CD4-positive, alpha-beta memory T cell (primary cell): ENCODE measurements at regions of chr10 and their contacts with region 1.

Region 1: GRCh38 chr10:6580279-6581029 is 378 bp upstream of the PRKCQ start:
- DNase-seq: peak; percentile 76 to 86 (median 82)
- H3K4me3 ChIP-seq: peak overlapping the region; percentile 83 to 86
- H3K4me3 Mint-ChIP-seq: peak overlapping the region; percentile 90 to 99 (median 94)
- H3K27ac ChIP-seq: peak overlapping the region; percentile 90
- H3K27ac Mint-ChIP-seq: peak overlapping the region; percentile 93 to 99 (median 96)
- H3K4me1 ChIP-seq: peaks cover 63% of the 10 kb centered on the region
- H3K4me1 Mint-ChIP-seq: peaks cover 40 to 82% (median 52%) of the 10 kb centered on the region in 4 donors
- H3K27me3 ChIP-seq: no peaks in the 10 kb centered on the region
- H3K27me3 Mint-ChIP-seq: no peaks in the 10 kb centered on the region

Region 2: GRCh38 chr10:6300106-6300783 is 280.2 kb before region 1 on chr10:
- CTCF ChIA-PET with region 1: no interaction called
- POLR2A ChIA-PET with region 1: no interaction called
- intact Hi-C with region 1: no loop called
- DNase-seq: peak; percentile 56 to 76 (median 71)
- H3K4me3 ChIP-seq: peak overlapping the region in 1 of 2 donors; percentile 28
- H3K4me3 Mint-ChIP-seq: peak overlapping the region; percentile 26 to 82 (median 57)
- H3K27ac ChIP-seq: peak overlapping the region; percentile 27
- H3K27ac Mint-ChIP-seq: peak overlapping the region; percentile 72 to 95 (median 91)
- H3K4me1 ChIP-seq: peaks cover 26% of the 10 kb centered on the region
- H3K4me1 Mint-ChIP-seq: peaks cover 16 to 42% (median 28%) of the 10 kb centered on the region in 4 donors
- H3K27me3 ChIP-seq: no peaks in the 10 kb centered on the region
- H3K27me3 Mint-ChIP-seq: no peaks in the 10 kb centered on the region

Region 3: DNA sequence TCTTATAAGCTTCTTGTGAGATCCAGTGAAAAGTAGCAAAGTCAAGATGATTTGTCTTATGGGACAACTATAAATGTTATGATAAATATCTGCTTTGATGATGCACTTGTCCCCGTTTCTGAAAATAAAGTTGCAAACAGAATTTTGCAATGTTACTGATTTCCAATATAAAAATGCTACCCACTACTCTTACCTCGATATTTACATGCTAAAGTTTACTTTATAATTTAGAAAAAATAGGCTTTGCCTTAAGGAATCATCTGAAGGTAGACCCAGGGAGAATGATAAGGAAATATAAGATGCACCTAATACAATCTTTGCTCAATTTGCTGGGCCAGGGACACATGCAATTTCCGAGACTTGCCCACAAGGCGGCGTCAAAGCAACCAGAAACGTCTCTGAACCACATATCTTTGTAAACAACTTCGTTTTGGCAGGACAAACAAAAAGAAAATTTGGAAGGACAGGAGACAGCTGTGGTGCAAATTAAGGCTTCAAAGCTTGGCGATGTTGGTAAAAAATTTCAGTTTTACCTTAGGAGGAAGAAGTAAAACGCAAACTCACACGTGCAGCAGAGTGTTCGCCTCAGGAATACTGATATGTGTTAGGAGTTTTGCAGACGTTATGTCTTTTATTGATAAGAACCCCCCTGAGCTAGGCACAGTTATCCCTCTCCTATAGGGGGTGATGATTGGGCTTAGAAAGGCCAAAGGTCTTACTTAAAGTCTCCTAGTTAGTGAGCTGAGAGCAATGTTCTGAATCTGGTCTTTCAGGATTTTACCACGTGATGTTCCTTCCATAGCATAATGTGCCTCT is 134.7 kb before region 1 on chr10:
- CTCF ChIA-PET with region 1: interaction called, 12 read pairs
- POLR2A ChIA-PET with region 1: interaction called, 9 read pairs
- intact Hi-C with region 1: loop called (anchors 1 kb)
- DNase-seq: peak; percentile 41 to 50 (median 46)
- H3K4me3 ChIP-seq: no peak overlapping the region
- H3K4me3 Mint-ChIP-seq: peak overlapping the region in 2 of 8 donors; percentile 3 to 41
- H3K27ac ChIP-seq: no peak overlapping the region
- H3K27ac Mint-ChIP-seq: peak overlapping the region in 6 of 7 donors; percentile 24 to 73 (median 58)
- H3K4me1 ChIP-seq: peaks cover 5% of the 10 kb centered on the region
- H3K4me1 Mint-ChIP-seq: peaks cover 18 to 44% (median 30%) of the 10 kb centered on the region in 4 donors
- H3K27me3 ChIP-seq: no peaks in the 10 kb centered on the region
- H3K27me3 Mint-ChIP-seq: no peaks in the 10 kb centered on the region

Region 4: GRCh38 chr10:6514844-6515780 is 65.3 kb before region 1 on chr10:
- CTCF ChIA-PET with region 1: interaction called, 7 read pairs
- POLR2A ChIA-PET with region 1: interaction called, 8 read pairs
- intact Hi-C with region 1: loop called (anchors 2 kb)
- DNase-seq: no peak
- H3K4me3 ChIP-seq: no peak overlapping the region
- H3K4me3 Mint-ChIP-seq: peak overlapping the region in 1 of 8 donors; percentile 11
- H3K27ac ChIP-seq: no peak overlapping the region
- H3K27ac Mint-ChIP-seq: peak overlapping the region in 6 of 7 donors; percentile 21 to 83 (median 68)
- H3K4me1 ChIP-seq: peaks cover 78% of the 10 kb centered on the region
- H3K4me1 Mint-ChIP-seq: peaks cover 63 to 94% (median 75%) of the 10 kb centered on the region in 4 donors
- H3K27me3 ChIP-seq: no peaks in the 10 kb centered on the region
- H3K27me3 Mint-ChIP-seq: no peaks in the 10 kb centered on the region

Region 5: GRCh38 chr10:6563075-6563474 is 17.4 kb before region 1 on chr10:
- CTCF ChIA-PET with region 1: interaction called, 29 read pairs
- POLR2A ChIA-PET with region 1: interaction called, 124 read pairs
- intact Hi-C with region 1: loop called (anchors 1 kb)
- DNase-seq: peak in 2 of 5 donors; percentile 35 to 62
- H3K4me3 ChIP-seq: peak overlapping the region in 1 of 2 donors; percentile 21
- H3K4me3 Mint-ChIP-seq: peak overlapping the region; percentile 68 to 90 (median 79)
- H3K27ac ChIP-seq: peak overlapping the region; percentile 56
- H3K27ac Mint-ChIP-seq: peak overlapping the region; percentile 85 to 94 (median 90)
- H3K4me1 ChIP-seq: peaks cover 98% of the 10 kb centered on the region
- H3K4me1 Mint-ChIP-seq: peaks cover 79 to 94% (median 88%) of the 10 kb centered on the region in 4 donors
- H3K27me3 ChIP-seq: no peaks in the 10 kb centered on the region
- H3K27me3 Mint-ChIP-seq: no peaks in the 10 kb centered on the region

Region 6: DNA sequence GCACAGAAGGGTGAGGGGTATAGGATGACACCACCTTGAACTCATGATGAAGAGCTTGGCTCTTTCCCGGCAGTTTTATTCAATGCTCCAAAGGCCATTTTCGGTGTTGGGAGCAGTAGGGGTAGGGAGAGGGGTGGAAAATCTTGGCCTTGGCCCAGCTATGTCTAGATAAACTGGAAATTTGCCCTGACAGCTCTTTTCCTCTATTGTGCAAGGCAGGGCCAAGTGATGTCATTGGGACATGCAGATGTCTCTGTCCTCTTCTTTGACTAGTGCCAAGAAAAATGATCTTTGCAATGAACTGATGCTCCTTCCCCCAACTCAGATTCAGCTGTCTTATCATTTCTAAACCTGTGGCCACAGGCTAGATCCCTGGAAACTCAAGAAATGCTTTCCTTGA is 27.3 kb after region 1 on chr10:
- CTCF ChIA-PET with region 1: interaction called, 106 read pairs
- POLR2A ChIA-PET with region 1: interaction called, 355 read pairs
- intact Hi-C with region 1: loop called (anchors 5 kb)
- DNase-seq: no peak
- H3K4me3 ChIP-seq: no peak overlapping the region
- H3K4me3 Mint-ChIP-seq: peak overlapping the region in 1 of 8 donors; percentile 72
- H3K27ac ChIP-seq: peak overlapping the region; percentile 43
- H3K27ac Mint-ChIP-seq: peak overlapping the region; percentile 73 to 97 (median 93)
- H3K4me1 ChIP-seq: peaks cover 47% of the 10 kb centered on the region
- H3K4me1 Mint-ChIP-seq: peaks cover 43 to 74% (median 53%) of the 10 kb centered on the region in 4 donors
- H3K27me3 ChIP-seq: no peaks in the 10 kb centered on the region
- H3K27me3 Mint-ChIP-seq: no peaks in the 10 kb centered on the region

Region 7: DNA sequence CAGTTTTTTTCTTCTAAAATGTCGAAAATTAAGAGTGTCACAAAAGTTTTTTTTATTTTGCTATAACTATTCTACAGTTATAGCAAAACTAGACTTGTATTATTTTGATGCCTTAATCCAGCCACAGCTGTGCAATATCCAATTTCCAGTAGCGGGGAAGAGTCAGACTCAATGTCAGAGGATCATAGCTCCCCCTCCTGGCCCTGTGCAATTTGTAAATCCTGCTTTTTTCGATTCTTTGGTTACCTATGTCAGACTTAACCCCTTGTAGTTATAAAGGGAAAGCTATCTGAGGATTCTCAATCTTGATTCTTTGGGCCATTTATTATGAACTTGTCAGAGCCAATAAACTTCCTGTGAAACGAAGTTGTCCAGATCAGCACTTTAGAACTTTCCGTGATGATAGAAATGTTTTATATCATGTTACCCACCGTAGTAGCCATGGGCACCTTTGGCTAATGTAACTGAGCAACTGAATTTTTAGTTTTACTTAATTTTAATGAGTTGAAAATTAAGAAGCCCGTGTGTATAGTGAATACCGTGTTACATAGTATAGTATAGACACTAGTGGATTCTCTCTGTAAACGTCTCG is 87.3 kb after region 1 on chr10:
- CTCF ChIA-PET with region 1: interaction called, 15 read pairs
- POLR2A ChIA-PET with region 1: interaction called, 18 read pairs
- intact Hi-C with region 1: loop called (anchors 1 kb)
- DNase-seq: peak in 4 of 5 donors; percentile 15 to 34 (median 26)
- H3K4me3 ChIP-seq: no peak overlapping the region
- H3K4me3 Mint-ChIP-seq: peak overlapping the region in 1 of 8 donors; percentile 10
- H3K27ac ChIP-seq: no peak overlapping the region
- H3K27ac Mint-ChIP-seq: no peak overlapping the region
- H3K4me1 ChIP-seq: peaks cover 22% of the 10 kb centered on the region
- H3K4me1 Mint-ChIP-seq: peaks cover 15 to 28% (median 21%) of the 10 kb centered on the region in 4 donors
- H3K27me3 ChIP-seq: no peaks in the 10 kb centered on the region
- H3K27me3 Mint-ChIP-seq: no peaks in the 10 kb centered on the region